ENCODE measurements at regions of chr2 and their contacts with region 1.

Region 1: GRCh38 chr2:240369801-240370585 is 65.5 kb upstream of the GPC1 start:
- DNase-seq: peak; percentile 90 to 97
- ATAC-seq: peak; percentile 72 to 76
- H3K4me3 ChIP-seq: peak overlapping the region; percentile 0 to 39 (median 28)
- H3K27ac ChIP-seq: peak overlapping the region; percentile 96 to 99 (median 98)
- H3K4me1 ChIP-seq: peaks cover 52 to 74% of the 10 kb centered on the region in 2 donors
- H3K27me3 ChIP-seq: no peaks in the 10 kb centered on the region
- CTCF ChIP-seq: no peak
- POLR2A ChIP-seq: peak; percentile 51 to 55

Region 2: DNA sequence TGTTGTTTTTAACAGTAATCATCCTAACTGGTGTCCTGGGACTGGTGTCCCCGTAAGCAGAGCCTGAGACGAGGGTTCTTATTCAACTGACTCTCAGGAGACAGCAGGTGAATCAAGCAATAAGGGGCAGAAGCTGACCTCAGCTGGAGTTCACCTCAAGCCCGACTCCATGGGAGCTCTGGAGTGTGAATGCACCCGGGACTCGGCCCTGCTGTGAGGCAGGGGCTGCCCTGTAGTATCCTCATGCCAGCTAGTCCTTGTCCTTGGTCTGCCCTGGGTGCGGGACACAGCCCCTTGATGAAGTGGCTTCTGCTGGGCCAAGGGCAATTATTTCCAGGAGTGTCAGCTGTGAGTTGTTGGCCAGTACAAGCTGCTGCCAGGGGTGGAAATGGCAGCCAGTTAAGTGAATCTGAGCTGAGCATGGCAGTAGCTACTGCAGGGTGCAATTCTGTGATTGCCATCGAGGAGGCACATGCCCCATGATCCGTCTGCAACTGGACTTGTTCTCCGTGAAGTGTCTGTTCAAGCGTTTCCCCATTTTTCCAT is 174.6 kb before region 1 on chr2:
- in situ Hi-C with region 1: no loop called
- intact Hi-C with region 1: loop called (anchors 2 kb)
- DNase-seq: peak; percentile 19 to 66
- ATAC-seq: peak; percentile 66 to 69
- H3K4me3 ChIP-seq: no peak overlapping the region
- H3K27ac ChIP-seq: peak overlapping the region; percentile 57 to 80 (median 68)
- H3K4me1 ChIP-seq: peaks cover 16 to 27% of the 10 kb centered on the region in 2 donors
- H3K27me3 ChIP-seq: peaks cover 0 to 4% (median 0%) of the 10 kb centered on the region in 3 donors
- CTCF ChIP-seq: no peak
- POLR2A ChIP-seq: no peak

Region 3: GRCh38 chr2:240259924-240260529 is 110.0 kb before region 1 on chr2:
- in situ Hi-C with region 1: no loop called
- intact Hi-C with region 1: loop called (anchors 2 kb)
- DNase-seq: peak; percentile 62 to 86
- ATAC-seq: peak; percentile 39 to 62
- H3K4me3 ChIP-seq: no peak overlapping the region
- H3K27ac ChIP-seq: peak overlapping the region; percentile 86 to 98 (median 96)
- H3K4me1 ChIP-seq: peaks cover 47 to 56% of the 10 kb centered on the region in 2 donors
- H3K27me3 ChIP-seq: no peaks in the 10 kb centered on the region
- CTCF ChIP-seq: no peak
- POLR2A ChIP-seq: no peak

Region 4: DNA sequence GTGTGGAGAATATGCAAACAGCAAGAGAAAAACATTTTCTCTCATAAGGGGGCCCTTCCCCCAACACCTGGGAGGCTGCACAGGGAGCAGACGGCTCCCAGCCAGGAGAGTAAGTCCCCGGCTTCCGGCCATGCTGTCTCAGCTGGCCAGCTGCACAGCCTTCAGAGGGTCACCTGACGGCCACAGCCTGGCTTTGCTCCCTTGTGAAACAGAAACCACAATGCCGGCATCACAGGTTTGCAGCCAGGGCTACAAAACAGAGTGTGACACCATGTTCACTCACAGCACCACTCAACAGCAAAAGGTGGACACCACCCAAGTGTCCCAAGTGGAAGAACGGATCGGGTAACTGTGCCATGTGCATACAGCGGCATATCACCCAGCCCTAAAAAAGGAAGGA is 21.5 kb before region 1 on chr2:
- in situ Hi-C with region 1: no loop called
- intact Hi-C with region 1: loop called (anchors 2 kb)
- DNase-seq: peak; percentile 88 to 89
- ATAC-seq: peak; percentile 95 to 98
- H3K4me3 ChIP-seq: no peak overlapping the region
- H3K27ac ChIP-seq: peak overlapping the region; percentile 67 to 79 (median 73)
- H3K4me1 ChIP-seq: peaks cover 8 to 11% of the 10 kb centered on the region in 2 donors
- H3K27me3 ChIP-seq: no peaks in the 10 kb centered on the region
- CTCF ChIP-seq: no peak
- POLR2A ChIP-seq: no peak

Measured in gastrocnemius medialis (tissue), 4 donors.